ENCODE measurements at regions of chr17 and their contacts with region 1.

Region 1: DNA sequence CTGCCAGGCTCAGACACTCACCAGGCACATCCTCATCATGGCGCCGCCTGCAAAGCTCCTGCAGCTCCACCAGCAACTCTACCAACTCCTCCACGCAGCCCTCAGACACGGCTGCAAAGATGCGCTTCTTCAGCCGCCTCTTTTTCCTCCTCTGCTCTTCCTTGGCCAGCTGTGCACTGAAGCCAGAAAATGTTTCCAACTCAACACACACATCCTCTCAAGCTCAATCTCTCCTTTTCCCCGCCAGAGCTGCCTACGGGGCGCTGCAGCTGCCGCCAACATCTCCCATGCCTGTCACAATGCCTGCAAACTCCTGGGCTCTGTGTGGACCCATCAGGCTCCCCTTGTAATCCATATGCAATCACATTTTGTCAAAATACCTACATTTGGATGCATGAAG is 14.2 kb downstream of the TRPV3 start:
- DNase-seq: no peak
- ATAC-seq: no peak

Region 2: GRCh38 chr17:3622977-3623594 is 79.6 kb after region 1 on chr17:
- intact Hi-C with region 1: loop called (anchors 2 kb)
- DNase-seq: no peak
- ATAC-seq: no peak

Region 3: GRCh38 chr17:3659541-3660111 is 116.2 kb after region 1 on chr17:
- intact Hi-C with region 1: loop called (anchors 10 kb)
- DNase-seq: peak; percentile 89
- ATAC-seq: peak; percentile 87

Region 4: GRCh38 chr17:3845621-3846441 is 302.4 kb after region 1 on chr17 and contains the start of gene NCBP3:
- intact Hi-C with region 1: no loop called
- DNase-seq: peak; percentile 93
- ATAC-seq: peak; percentile 98
- total RNA-seq, gene NCBP3: 42.3 TPM